Testis (tissue), 5 donors: ENCODE measurements at regions of chr11 and their contacts with region 1.

Region 1: GRCh38 chr11:120511116-120511819 is at the start of gene GRIK4:
- DNase-seq: peak; percentile 91
- H3K4me3 ChIP-seq: peak within 1 kb of the TSS; percentile 38 to 47
- H3K27ac ChIP-seq: no peak within 1 kb of the TSS
- H3K4me1 ChIP-seq: no peaks in the 10 kb centered on the region
- H3K27me3 ChIP-seq: no peaks in the 10 kb centered on the region
- CTCF ChIP-seq: peak; percentile 88 to 97 (median 95)
- POLR2A ChIP-seq: no peak
- total RNA-seq, gene GRIK4: 2.6 TPM

Region 2: GRCh38 chr11:120494595-120494994 is 16.7 kb before region 1 on chr11:
- intact Hi-C with region 1: no loop called
- DNase-seq: no peak
- H3K4me3 ChIP-seq: no peak overlapping the region
- H3K27ac ChIP-seq: no peak overlapping the region
- H3K4me1 ChIP-seq: no peaks in the 10 kb centered on the region
- H3K27me3 ChIP-seq: no peaks in the 10 kb centered on the region
- CTCF ChIP-seq: no peak
- POLR2A ChIP-seq: no peak

Region 3: GRCh38 chr11:120667281-120667680 is 156.0 kb after region 1 on chr11:
- intact Hi-C with region 1: no loop called
- DNase-seq: peak; percentile 65
- H3K4me3 ChIP-seq: no peak overlapping the region
- H3K27ac ChIP-seq: no peak overlapping the region
- H3K4me1 ChIP-seq: no peaks in the 10 kb centered on the region
- H3K27me3 ChIP-seq: no peaks in the 10 kb centered on the region
- CTCF ChIP-seq: no peak
- POLR2A ChIP-seq: no peak

Region 4: DNA sequence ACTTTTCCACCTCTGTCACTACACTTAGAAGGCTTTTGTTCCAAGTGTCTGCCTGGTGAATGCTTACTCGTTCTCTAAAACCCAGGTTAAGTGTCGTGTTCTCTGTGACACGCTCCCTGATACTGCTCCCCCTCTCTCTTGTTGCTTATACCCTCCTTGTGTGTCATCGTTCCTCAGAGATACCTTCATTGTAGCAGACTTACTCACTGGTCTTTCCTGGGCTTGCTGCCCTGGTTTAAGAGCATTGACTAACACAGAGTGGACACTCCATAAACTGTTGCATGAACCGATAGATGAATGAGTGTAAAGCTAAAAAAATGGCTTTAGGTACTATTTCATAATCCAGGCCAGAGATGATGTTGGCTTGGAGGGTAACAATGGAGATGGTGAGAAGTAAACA is 171.6 kb after region 1 on chr11:
- intact Hi-C with region 1: loop called (anchors 10 kb)
- DNase-seq: no peak
- H3K4me3 ChIP-seq: no peak overlapping the region
- H3K27ac ChIP-seq: no peak overlapping the region
- H3K4me1 ChIP-seq: no peaks in the 10 kb centered on the region
- H3K27me3 ChIP-seq: no peaks in the 10 kb centered on the region
- CTCF ChIP-seq: no peak
- POLR2A ChIP-seq: no peak

Region 5: GRCh38 chr11:120801801-120802689 is 290.8 kb after region 1 on chr11:
- intact Hi-C with region 1: loop called (anchors 10 kb)
- DNase-seq: peak; percentile 87
- H3K4me3 ChIP-seq: no peak overlapping the region
- H3K27ac ChIP-seq: no peak overlapping the region
- H3K4me1 ChIP-seq: no peaks in the 10 kb centered on the region
- H3K27me3 ChIP-seq: no peaks in the 10 kb centered on the region
- CTCF ChIP-seq: peak; percentile 67 to 96 (median 78)
- POLR2A ChIP-seq: no peak

Region 6: DNA sequence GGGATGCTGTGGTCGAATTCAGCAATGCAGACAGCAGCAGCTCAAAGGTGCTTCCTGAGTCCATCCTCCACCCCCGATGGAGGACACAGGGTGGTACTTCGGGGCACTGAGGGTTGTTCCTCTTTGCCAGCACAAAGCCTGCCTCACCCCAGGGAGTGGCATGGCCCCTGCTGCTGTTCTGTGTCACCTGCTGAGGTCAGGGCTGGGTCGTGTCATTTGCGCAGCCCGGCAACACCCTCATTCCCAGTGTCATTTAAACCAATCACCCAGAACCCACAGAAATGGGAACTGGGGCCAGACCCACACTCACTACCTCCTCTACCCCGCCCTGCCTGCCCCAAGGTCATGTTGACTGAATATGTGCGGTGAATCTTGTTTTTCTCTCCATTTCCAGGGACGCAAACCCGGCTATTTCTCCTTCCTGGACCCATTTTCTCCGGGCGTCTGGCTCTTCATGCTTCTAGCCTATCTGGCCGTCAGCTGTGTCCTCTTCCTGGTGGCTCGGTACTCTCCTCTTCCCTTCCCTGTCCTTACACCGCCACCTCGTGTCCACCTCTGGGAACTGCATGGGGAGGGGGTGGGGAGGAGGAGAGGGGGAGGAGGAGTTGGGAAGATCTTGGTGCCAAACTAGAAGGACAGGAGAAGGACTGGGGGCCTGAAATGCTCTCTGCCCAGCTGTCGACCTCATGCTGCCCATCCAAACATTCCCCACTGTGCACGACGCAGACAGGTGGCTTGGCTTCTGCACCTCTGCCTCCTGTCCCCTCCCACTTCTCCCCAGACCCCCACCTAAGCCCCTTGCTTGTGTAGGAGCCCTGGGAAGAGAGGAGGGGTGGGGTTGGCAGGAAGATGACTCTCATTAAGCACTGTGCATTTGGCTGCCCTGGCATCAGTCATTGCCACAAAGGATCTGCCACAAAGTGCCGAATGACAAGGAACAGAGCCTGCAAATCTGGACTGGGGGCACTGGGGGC is 441.5 kb after region 1 on chr11:
- intact Hi-C with region 1: loop called (anchors 5 kb)
- DNase-seq: peak; percentile 82
- H3K4me3 ChIP-seq: no peak overlapping the region
- H3K27ac ChIP-seq: no peak overlapping the region
- H3K4me1 ChIP-seq: peaks cover 4% of the 10 kb centered on the region
- H3K27me3 ChIP-seq: no peaks in the 10 kb centered on the region
- CTCF ChIP-seq: peak; percentile 12 to 79 (median 40)
- POLR2A ChIP-seq: no peak

Region 7: GRCh38 chr11:121104312-121104762 is 593.1 kb after region 1 on chr11:
- intact Hi-C with region 1: loop called (anchors 10 kb)
- DNase-seq: peak; percentile 75
- H3K4me3 ChIP-seq: no peak overlapping the region
- H3K27ac ChIP-seq: peak overlapping the region in 1 of 2 donors; percentile 20
- H3K4me1 ChIP-seq: peaks cover 22% of the 10 kb centered on the region
- H3K27me3 ChIP-seq: no peaks in the 10 kb centered on the region
- CTCF ChIP-seq: peak in 1 of 3 experiments; percentile 12
- POLR2A ChIP-seq: no peak